ENCODE measurements at regions of chr15 and their contacts with region 1.

Region 1: DNA sequence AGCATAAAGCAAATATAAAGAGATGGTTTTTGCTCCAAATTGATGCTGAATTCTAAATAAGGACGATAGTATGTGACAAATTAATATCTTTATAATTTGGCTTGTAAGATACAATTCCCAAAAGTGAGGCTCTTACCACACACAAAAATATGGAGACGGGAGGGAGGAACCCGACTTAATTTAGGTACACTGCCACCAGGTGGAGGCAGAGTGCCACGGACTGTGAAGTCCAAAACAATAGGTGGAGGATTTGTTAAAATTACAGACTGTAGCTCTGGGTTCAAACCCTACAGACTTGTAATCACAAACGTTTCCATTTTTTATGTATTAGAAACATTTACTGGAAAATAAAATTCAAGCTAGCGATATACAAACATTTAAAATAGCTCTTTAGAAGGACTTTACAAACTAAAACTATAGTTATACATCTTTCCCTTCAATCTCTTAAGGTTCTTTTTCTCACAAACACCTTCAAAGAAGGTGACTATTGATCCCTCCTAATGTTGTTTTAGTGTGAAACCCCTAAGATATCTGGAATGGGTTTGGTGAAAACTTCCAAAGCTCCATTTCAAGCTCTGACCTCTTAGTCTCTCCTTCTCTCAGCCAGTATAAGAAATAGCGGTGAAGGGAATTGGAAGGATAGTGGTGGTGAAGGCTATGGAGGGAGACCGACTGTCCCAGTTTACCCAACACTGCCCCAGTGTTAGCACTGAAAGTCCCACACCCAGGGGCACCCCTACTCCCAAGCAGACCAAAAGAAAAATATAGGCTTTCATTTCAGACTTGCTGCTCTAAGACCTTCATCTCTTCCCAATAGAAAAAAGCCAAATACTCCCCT is 89.7 kb downstream of the AQP9 start:
- DNase-seq: peak; percentile 63
- H3K4me3 ChIP-seq: no peak overlapping the region
- H3K27ac ChIP-seq: no peak overlapping the region
- H3K27me3 ChIP-seq: no peaks in the 10 kb centered on the region
- CTCF ChIP-seq: peak; percentile 92

Region 2: GRCh38 chr15:57911247-57911646 is 316.7 kb before region 1 on chr15:
- CTCF ChIA-PET with region 1: no interaction called
- POLR2A ChIA-PET with region 1: no interaction called
- DNase-seq: no peak
- H3K4me3 ChIP-seq: no peak overlapping the region
- H3K27ac ChIP-seq: no peak overlapping the region
- H3K27me3 ChIP-seq: peaks cover 6% of the 10 kb centered on the region
- CTCF ChIP-seq: no peak

Region 3: DNA sequence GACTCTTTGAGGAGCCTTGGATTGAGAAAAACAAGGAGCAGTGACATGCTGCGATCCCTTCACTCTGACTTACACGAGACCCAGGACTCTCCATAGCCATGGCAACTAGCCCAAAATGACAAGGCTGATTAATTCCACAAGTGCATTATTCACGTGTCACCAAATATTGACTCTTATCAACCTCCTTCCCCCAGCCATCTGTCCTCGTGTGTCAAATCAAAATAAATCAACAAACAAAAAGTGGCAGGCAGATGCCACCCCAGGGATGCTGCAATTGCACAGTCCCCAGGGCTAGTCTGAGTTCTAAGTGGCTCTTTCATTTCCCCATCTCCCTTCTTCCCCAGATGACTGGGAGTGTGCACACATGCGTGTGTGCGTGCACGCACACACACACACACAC is 15.1 kb after region 1 on chr15:
- CTCF ChIA-PET with region 1: no interaction called
- POLR2A ChIA-PET with region 1: no interaction called
- DNase-seq: no peak
- H3K4me3 ChIP-seq: no peak overlapping the region
- H3K27ac ChIP-seq: no peak overlapping the region
- H3K27me3 ChIP-seq: peaks cover 3% of the 10 kb centered on the region
- CTCF ChIP-seq: no peak

Region 4: DNA sequence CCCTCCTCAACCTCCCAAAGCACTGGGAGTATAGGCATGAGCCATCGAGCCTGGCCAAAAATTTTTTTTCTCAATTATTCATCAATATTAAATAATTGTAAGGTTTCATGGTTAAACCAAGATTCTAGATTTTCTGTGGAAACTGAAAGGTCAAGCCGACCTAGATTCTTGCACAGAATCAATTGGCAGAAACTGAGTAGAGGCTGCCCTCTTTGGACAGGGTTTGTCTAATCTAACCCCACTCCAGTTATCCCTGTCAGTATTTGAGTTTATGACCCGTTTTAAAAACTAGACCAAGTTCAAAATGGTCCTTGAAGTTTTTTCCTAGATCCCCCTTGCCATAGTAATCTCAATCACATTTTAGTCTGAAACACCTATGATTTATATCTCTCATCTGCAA is 530.2 kb after region 1 on chr15:
- CTCF ChIA-PET with region 1: interaction called, 17 read pairs
- POLR2A ChIA-PET with region 1: no interaction called
- DNase-seq: no peak
- H3K4me3 ChIP-seq: no peak overlapping the region
- H3K27ac ChIP-seq: no peak overlapping the region
- H3K27me3 ChIP-seq: no peaks in the 10 kb centered on the region
- CTCF ChIP-seq: peak; percentile 39; the same call in 1 of the 2 replicates

Region 5: DNA sequence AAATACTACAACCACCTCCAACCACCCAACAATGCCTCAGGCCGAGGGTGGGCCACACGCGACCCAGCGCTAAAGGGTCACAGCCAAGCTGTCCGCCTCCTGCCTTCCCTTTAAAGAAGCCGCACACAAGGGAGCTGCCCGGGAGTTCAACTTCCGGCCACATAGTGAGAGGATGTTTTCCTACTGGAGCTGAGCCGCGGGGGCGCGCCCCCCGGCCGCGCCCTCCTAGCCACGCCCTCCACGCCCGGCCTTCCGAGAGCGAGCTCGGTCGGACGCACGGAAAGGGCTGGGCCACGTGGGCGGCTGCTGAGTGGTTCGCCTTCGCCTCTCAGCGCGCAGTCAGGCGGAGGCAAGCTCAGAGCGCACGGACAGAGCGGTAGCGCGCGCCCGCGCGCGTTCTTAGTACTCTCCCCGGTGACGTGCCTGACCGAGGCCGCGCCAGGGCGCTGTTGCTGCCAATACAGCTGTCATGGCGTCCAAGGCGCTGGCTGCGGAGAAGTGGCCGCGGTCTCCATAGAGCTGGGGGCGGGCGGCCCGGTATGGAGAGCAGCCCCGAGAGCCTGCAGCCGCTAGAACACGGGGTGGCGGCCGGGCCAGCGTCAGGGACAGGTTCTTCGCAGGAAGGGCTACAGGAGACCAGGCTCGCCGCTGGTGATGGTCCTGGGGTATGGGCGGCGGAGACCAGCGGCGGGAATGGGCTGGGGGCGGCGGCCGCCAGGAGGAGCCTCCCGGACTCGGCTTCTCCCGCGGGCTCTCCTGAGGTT is 543.1 kb after region 1 on chr15 and contains the start of gene MINDY2:
- CTCF ChIA-PET with region 1: interaction called, 26 read pairs
- POLR2A ChIA-PET with region 1: interaction called, 4 read pairs
- DNase-seq: peak; percentile 98
- H3K4me3 ChIP-seq: peak within 1 kb of the TSS; percentile 79
- H3K27ac ChIP-seq: peak within 1 kb of the TSS; percentile 97
- H3K27me3 ChIP-seq: no peaks in the 10 kb centered on the region
- CTCF ChIP-seq: peak; percentile 36
- polyA plus RNA-seq, gene MINDY2: 11.0 and 17.5 TPM in 2 replicates

Region 6: GRCh38 chr15:58839485-58839884 is 611.6 kb after region 1 on chr15:
- CTCF ChIA-PET with region 1: interaction called, 11 read pairs
- POLR2A ChIA-PET with region 1: no interaction called
- DNase-seq: no peak
- H3K4me3 ChIP-seq: no peak overlapping the region
- H3K27ac ChIP-seq: no peak overlapping the region
- H3K27me3 ChIP-seq: no peaks in the 10 kb centered on the region
- CTCF ChIP-seq: peak; percentile 44

Measured in AG04450 (cell line).